Activated CD4-positive, alpha-beta memory T cell treated with anti-CD3 and anti-CD28 coated beads, Interleukin-2, amount 10 ng/mL, durations not matched to agents 7 days and 5 days (primary cell): ENCODE measurements at regions of chr2 and their contacts with region 1.

Region 1: GRCh38 chr2:46776687-46777327 is 138.8 kb downstream of the MCFD2 start:
- DNase-seq: peak; percentile 52
- H3K4me3 Mint-ChIP-seq: no peak overlapping the region
- H3K27ac Mint-ChIP-seq: no peak overlapping the region
- H3K4me1 Mint-ChIP-seq: no peaks in the 10 kb centered on the region
- H3K27me3 Mint-ChIP-seq: peaks cover 5% of the 10 kb centered on the region

Region 2: GRCh38 chr2:46793423-46794416 is 16.9 kb after region 1 on chr2:
- CTCF ChIA-PET with region 1: interaction called, 10 read pairs
- POLR2A ChIA-PET with region 1: no interaction called
- DNase-seq: no peak
- H3K4me3 Mint-ChIP-seq: no peak overlapping the region
- H3K27ac Mint-ChIP-seq: no peak overlapping the region
- H3K4me1 Mint-ChIP-seq: no peaks in the 10 kb centered on the region
- H3K27me3 Mint-ChIP-seq: peaks cover 45% of the 10 kb centered on the region

Region 3: DNA sequence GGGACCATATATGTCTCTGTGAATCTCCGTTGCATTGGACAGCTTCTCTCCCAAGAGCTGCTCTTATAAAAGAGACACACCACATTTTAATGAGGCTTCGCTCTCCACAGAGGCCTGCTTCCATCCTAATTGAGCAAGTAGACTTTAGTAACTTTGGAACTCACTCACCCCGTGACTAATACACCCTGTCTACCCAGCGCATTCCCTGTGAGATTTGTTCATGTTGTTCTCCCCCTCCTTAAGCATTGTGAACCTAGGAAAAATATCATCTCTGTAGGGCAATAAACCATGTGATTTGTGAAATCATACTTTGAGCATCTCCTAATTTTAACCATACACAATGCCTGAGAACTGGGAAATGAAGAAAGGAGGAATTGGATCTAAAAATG is 81.9 kb after region 1 on chr2:
- CTCF ChIA-PET with region 1: no interaction called
- POLR2A ChIA-PET with region 1: no interaction called
- DNase-seq: no peak
- H3K4me3 Mint-ChIP-seq: no peak overlapping the region
- H3K27ac Mint-ChIP-seq: no peak overlapping the region
- H3K4me1 Mint-ChIP-seq: no peaks in the 10 kb centered on the region
- H3K27me3 Mint-ChIP-seq: peaks cover 15% of the 10 kb centered on the region